Mammary epithelial cell (primary cell): ENCODE measurements at regions of chr1 and their contacts with region 1.

Region 1: GRCh38 chr1:112872551-112872962 is 83.4 kb downstream of the SLC16A1 start:
- DNase-seq: no peak
- H3K4me3 ChIP-seq: no peak overlapping the region
- H3K27ac ChIP-seq: no peak overlapping the region
- H3K4me1 ChIP-seq: peaks cover 18% of the 10 kb centered on the region
- H3K27me3 ChIP-seq: no peaks in the 10 kb centered on the region
- CTCF ChIP-seq: no peak

Region 2: GRCh38 chr1:112778137-112778536 is 94.4 kb before region 1 on chr1:
- CTCF ChIA-PET with region 1: no interaction called
- dilution Hi-C with region 1: loop called (anchors 5 kb)
- in situ Hi-C with region 1: no loop called
- intact Hi-C with region 1: no loop called
- DNase-seq: peak; percentile 29
- H3K4me3 ChIP-seq: no peak overlapping the region
- H3K27ac ChIP-seq: no peak overlapping the region
- H3K4me1 ChIP-seq: no peaks in the 10 kb centered on the region
- H3K27me3 ChIP-seq: no peaks in the 10 kb centered on the region
- CTCF ChIP-seq: no peak

Region 3: DNA sequence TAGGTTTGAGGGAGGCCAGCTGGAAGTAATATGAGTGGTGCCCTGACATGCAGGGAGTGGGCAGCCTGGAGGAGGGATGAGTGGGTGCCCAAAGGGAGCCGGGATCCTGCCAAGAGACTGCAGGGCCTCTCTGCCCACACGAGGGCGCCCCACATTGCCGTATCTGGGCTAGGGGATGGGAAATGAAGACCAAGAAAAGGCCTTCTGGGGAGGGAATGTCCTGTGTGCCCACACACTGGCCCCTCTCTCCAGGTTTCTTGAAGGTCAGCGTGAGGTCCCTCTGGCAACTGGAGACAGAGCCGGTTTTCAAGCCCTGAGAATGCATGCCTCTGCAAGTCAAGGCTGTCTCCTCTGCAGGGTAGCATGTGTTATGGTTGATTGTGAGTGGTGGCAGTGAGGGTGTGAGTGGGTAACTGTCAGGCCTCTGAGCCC is 63.3 kb before region 1 on chr1:
- CTCF ChIA-PET with region 1: no interaction called
- dilution Hi-C with region 1: loop called (anchors 5 kb)
- in situ Hi-C with region 1: no loop called
- intact Hi-C with region 1: loop called (anchors 1 kb)
- DNase-seq: peak; percentile 62
- H3K4me3 ChIP-seq: no peak overlapping the region
- H3K27ac ChIP-seq: no peak overlapping the region
- H3K4me1 ChIP-seq: peaks cover 9% of the 10 kb centered on the region
- H3K27me3 ChIP-seq: no peaks in the 10 kb centered on the region
- CTCF ChIP-seq: peak; percentile 95 to 96